K562 (cell line): ENCODE measurements at regions of chr10 and their contacts with region 1.

Region 1: DNA sequence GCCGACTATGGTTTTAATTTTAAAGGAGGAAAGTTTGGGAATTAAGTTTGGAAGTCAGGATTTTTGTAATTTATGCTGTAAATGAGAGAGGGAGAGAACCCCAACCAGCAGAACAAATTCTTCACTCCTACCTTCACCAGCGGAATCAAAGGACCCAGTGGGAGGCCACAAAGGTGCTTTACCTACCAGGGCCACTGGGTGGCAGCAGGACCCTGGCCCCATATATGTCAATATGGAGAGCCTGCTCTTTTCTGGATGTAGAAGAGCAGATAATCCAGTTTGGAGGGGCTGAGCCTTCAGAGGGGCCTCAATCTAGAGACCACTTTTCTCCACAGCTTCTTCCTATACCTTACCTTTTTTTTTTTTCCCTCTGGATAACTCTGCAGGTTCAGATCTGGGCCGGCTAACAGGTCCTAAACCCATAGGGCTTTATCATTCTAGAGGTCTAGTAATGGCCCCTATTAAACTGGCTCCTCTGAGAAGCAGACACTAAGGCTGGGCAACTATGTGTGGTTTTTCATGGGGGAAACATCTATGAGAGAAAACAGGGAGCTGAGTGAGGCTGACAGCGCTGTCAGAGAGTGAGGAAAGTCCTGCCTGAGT is 8.5 kb upstream of the SCD start:
- DNase-seq: peak; percentile 66 to 78 (median 68)
- ATAC-seq: peak; percentile 84
- H3K4me3 ChIP-seq: no peak overlapping the region
- H3K27ac ChIP-seq: no peak overlapping the region
- H3K4me1 ChIP-seq: peaks cover 0 to 14% of the 10 kb centered on the region in 2 experiments; a peak in 3 of 5 replicates
- H3K27me3 ChIP-seq: peaks cover 0 to 3% of the 10 kb centered on the region in 2 experiments; a peak in 2 of 5 replicates
- CTCF ChIP-seq: peak; percentile 83 to 89 (median 86)
- EP300 ChIP-seq: no peak
- POLR2A ChIP-seq: no peak
- RAD21 ChIP-seq: peak; percentile 77 to 89

Region 2: GRCh38 chr10:100325158-100325557 is 13.4 kb before region 1 on chr10:
- CTCF ChIA-PET with region 1: interaction called, 3 read pairs
- POLR2A ChIA-PET with region 1: interaction called, 10 read pairs
- in situ Hi-C with region 1: no loop called
- intact Hi-C with region 1: no loop called
- DNase-seq: peak in 3 of 4 experiments; percentile 24 to 56 (median 49)
- ATAC-seq: peak; percentile 76
- H3K4me3 ChIP-seq: no peak overlapping the region
- H3K27ac ChIP-seq: no peak overlapping the region
- H3K4me1 ChIP-seq: no peaks in the 10 kb centered on the region
- H3K27me3 ChIP-seq: peaks cover 4 to 25% of the 10 kb centered on the region in 2 experiments; a peak in 3 of 5 replicates
- CTCF ChIP-seq: no peak
- EP300 ChIP-seq: no peak
- POLR2A ChIP-seq: no peak
- RAD21 ChIP-seq: no peak

Region 3: GRCh38 chr10:100508691-100509150 is 170.2 kb after region 1 on chr10:
- CTCF ChIA-PET with region 1: interaction called, 3 read pairs
- POLR2A ChIA-PET with region 1: no interaction called
- in situ Hi-C with region 1: loop called (anchors 5 kb)
- intact Hi-C with region 1: loop called (anchors 2 kb)
- DNase-seq: peak; percentile 48 to 65 (median 62)
- ATAC-seq: peak; percentile 98
- H3K4me3 ChIP-seq: no peak overlapping the region
- H3K27ac ChIP-seq: no peak overlapping the region
- H3K4me1 ChIP-seq: peaks cover 0 to 4% of the 10 kb centered on the region in 2 experiments; a peak in 2 of 5 replicates
- H3K27me3 ChIP-seq: no peaks in the 10 kb centered on the region
- CTCF ChIP-seq: peak; percentile 67 to 78 (median 74)
- EP300 ChIP-seq: no peak
- POLR2A ChIP-seq: no peak
- RAD21 ChIP-seq: peak; percentile 65 to 80

Region 4: GRCh38 chr10:100697070-100697469 is 358.5 kb after region 1 on chr10:
- CTCF ChIA-PET with region 1: no interaction called
- POLR2A ChIA-PET with region 1: no interaction called
- in situ Hi-C with region 1: no loop called
- intact Hi-C with region 1: no loop called
- DNase-seq: no peak
- ATAC-seq: no peak
- H3K4me3 ChIP-seq: no peak overlapping the region
- H3K27ac ChIP-seq: no peak overlapping the region
- H3K4me1 ChIP-seq: no peaks in the 10 kb centered on the region
- H3K27me3 ChIP-seq: no peaks in the 10 kb centered on the region; a peak in 3 of 5 replicates
- CTCF ChIP-seq: no peak
- EP300 ChIP-seq: no peak
- POLR2A ChIP-seq: no peak
- RAD21 ChIP-seq: no peak